PC-3 (cell line): ENCODE measurements at regions of chr4 and their contacts with region 1.

Region 1: DNA sequence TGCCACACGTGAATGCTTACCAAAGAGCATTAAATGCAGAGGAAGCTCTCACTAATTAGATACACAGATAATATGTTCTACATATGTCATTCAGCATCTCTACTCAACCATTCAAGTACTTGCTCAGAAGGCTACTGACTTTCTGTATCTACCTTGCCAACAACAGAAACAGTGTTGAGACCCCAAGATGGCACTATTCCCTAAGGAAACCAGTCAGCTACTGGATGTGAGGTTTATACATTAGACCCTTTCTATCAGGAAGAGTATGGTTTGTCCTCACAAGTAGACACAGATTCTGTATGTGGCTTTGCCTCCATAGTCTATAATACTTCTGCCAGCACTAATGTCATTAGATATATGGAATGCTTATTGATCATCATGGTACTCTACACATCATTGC is 443.9 kb upstream of the INTU start:
- DNase-seq: peak; percentile 3
- ATAC-seq: peak; percentile 29; the same call in 1 of the 2 replicates
- H3K4me3 ChIP-seq: no peak overlapping the region
- H3K27ac ChIP-seq: no peak overlapping the region
- H3K4me1 ChIP-seq: no peaks in the 10 kb centered on the region
- H3K27me3 ChIP-seq: no peaks in the 10 kb centered on the region
- CTCF ChIP-seq: 0 out of 2 replicates have a peak, but pooled peaks have one; percentile 15

Region 2: DNA sequence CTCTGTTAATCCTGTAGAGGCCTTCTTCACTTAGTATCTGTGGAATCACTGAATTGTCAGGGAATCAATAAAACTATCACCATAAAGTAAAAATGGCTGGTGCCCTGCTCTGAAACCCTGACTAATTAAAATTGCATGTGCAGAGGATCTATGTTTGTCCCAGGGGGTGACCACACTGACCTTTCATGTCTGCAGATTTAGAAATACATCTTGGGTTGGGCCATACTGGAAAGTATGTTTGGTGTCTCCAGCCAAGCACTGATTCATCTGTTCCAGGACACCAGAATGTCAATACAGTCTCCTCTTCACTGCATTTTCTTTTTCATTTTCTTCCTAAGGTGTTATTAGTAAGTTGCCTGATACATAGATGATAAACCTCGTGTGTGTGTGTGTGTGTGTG is 47.0 kb before region 1 on chr4:
- CTCF ChIA-PET with region 1: no interaction called
- POLR2A ChIA-PET with region 1: no interaction called
- intact Hi-C with region 1: no loop called
- DNase-seq: peak; percentile 10
- ATAC-seq: no peak
- H3K4me3 ChIP-seq: no peak overlapping the region
- H3K27ac ChIP-seq: no peak overlapping the region
- H3K4me1 ChIP-seq: peaks cover 3% of the 10 kb centered on the region; the same call in 1 of the 2 replicates
- H3K27me3 ChIP-seq: no peaks in the 10 kb centered on the region
- CTCF ChIP-seq: no peak

Region 3: GRCh38 chr4:127400731-127401346 is 212.0 kb after region 1 on chr4:
- CTCF ChIA-PET with region 1: no interaction called
- POLR2A ChIA-PET with region 1: no interaction called
- intact Hi-C with region 1: loop called (anchors 2 kb)
- DNase-seq: peak; percentile 68
- ATAC-seq: peak; percentile 58; the same call in 1 of the 2 replicates
- H3K4me3 ChIP-seq: no peak overlapping the region
- H3K27ac ChIP-seq: no peak overlapping the region
- H3K4me1 ChIP-seq: no peaks in the 10 kb centered on the region
- H3K27me3 ChIP-seq: no peaks in the 10 kb centered on the region
- CTCF ChIP-seq: peak; percentile 75

Region 4: GRCh38 chr4:127479031-127479622 is 290.3 kb after region 1 on chr4:
- CTCF ChIA-PET with region 1: no interaction called
- POLR2A ChIA-PET with region 1: no interaction called
- intact Hi-C with region 1: loop called (anchors 5 kb)
- DNase-seq: peak; percentile 40
- ATAC-seq: no peak
- H3K4me3 ChIP-seq: no peak overlapping the region
- H3K27ac ChIP-seq: no peak overlapping the region
- H3K4me1 ChIP-seq: no peaks in the 10 kb centered on the region
- H3K27me3 ChIP-seq: no peaks in the 10 kb centered on the region
- CTCF ChIP-seq: peak; percentile 71